K562 (cell line): ENCODE measurements at regions of chr11 and their contacts with region 1.

Region 1: DNA sequence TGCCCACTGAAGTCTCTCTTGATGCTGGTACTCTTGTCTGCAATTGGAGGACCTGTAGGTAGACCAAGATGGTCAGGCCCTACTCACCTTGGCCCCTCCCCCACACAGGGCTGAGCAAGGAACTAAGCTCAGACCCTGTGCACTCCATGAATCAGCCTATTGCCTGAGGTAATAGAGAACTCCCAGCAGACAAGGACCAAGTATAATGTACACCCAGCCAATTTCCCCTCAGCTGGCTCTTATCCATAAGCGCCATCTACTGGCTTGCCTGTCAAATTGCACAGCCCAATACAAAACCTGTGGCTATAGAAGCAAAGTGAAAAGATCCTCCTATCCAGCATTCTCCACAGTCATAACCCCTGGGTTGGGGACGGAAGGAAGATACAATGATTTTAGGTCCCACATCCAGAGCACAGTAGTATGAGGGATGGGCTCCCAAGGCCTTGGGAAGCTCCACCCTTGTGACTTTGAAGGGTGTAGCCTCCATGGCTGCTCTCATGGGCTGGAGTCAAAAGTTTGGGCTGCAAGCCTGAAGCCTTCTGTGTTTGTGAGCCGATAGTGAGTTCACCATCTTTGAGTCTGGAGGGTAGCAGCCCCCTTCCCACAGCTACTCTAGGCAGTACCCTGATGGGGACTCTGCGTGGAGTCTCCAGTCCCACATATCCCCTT is 56.0 kb downstream of the GLYATL2 start:
- DNase-seq: peak; percentile 52 to 79 (median 60)
- ATAC-seq: peak; percentile 96
- H3K4me3 ChIP-seq: no peak overlapping the region
- H3K27ac ChIP-seq: no peak overlapping the region
- H3K4me1 ChIP-seq: peaks cover 0 to 8% of the 10 kb centered on the region in 2 experiments; a peak in 4 of 5 replicates
- H3K27me3 ChIP-seq: no peaks in the 10 kb centered on the region
- CTCF ChIP-seq: peak; percentile 92 to 97 (median 93)
- EP300 ChIP-seq: no peak
- POLR2A ChIP-seq: no peak
- RAD21 ChIP-seq: peak; percentile 97

Region 2: DNA sequence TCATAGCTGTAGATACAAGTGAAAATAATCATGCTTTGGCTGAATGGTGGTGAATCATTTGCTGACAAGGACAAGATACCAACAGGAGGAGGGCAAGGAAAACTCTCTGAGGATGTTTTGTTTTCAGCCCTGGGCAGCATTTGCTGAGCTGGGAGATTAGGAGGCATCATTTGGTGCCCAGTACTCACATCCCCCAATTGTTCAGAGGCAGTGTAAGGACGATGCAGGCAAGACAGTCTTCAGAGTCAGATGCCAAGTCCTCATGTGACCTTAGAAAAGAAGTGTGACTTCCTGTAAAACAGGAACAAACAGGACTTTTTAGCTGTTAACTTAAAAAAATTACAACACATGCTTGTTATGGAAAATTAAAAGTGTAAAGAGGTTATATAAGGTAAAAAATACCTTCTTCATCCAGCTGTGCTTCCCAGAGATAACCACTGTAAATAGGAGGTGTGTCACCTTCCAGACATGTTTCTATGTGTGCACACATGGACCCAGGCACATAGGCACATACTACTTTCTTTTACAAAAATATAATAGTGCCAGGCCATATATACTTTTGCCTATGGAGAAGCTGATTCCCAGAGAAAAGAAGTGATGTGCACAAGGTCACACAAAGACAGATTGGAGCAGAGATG is 148.0 kb before region 1 on chr11:
- CTCF ChIA-PET with region 1: interaction called, 6 read pairs
- POLR2A ChIA-PET with region 1: no interaction called
- in situ Hi-C with region 1: no loop called
- intact Hi-C with region 1: loop called (anchors 1 kb)
- DNase-seq: no peak
- ATAC-seq: no peak
- H3K4me3 ChIP-seq: no peak overlapping the region
- H3K27ac ChIP-seq: no peak overlapping the region
- H3K4me1 ChIP-seq: peaks cover 0 to 9% of the 10 kb centered on the region in 2 experiments; a peak in 3 of 5 replicates
- H3K27me3 ChIP-seq: no peaks in the 10 kb centered on the region
- CTCF ChIP-seq: no peak
- EP300 ChIP-seq: no peak
- POLR2A ChIP-seq: no peak
- RAD21 ChIP-seq: no peak

Region 3: DNA sequence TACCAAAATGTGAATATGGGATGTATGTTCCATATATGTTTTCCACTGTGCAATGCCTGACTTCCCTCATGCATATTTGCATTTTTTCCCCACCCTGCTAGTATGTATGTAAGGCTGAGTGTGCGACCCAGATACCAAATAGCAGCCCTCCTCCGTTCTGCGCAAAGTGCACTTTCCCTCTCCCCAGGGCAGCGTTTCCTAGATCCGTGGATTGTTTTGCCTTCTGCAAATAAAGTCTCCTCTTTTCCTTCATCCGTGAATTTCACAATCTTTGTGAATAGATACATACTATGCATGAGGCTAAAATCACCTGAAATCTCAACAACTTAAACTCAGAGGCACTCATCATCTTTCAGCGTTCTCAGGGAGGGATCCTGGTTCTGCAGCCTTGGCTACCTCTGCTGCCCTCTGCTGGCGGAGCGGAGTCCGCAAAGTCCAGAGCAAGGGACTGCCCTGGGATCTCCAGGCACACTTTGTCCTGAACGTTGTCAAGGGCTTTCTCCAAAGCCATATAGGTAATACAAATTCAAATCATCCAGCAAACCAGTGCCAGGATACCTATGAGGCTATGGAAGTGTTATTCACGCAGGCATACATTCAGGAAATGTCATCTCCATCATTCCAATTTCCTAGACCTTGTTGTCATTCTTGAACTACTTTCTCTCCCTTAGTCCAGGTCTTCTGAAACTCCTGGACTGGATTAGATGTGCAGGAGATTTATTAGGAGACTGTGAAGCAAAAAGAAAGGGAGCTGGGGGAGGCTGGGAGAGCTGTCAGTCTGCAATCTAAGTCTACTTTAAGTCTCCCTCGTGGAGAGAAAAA is 112.9 kb before region 1 on chr11:
- CTCF ChIA-PET with region 1: no interaction called
- POLR2A ChIA-PET with region 1: interaction called, 3 read pairs
- in situ Hi-C with region 1: loop called (anchors 10 kb)
- intact Hi-C with region 1: loop called (anchors 1 kb)
- DNase-seq: peak; percentile 73 to 84 (median 78)
- ATAC-seq: peak; percentile 99
- H3K4me3 ChIP-seq: no peak overlapping the region
- H3K27ac ChIP-seq: no peak overlapping the region
- H3K4me1 ChIP-seq: no peaks in the 10 kb centered on the region; a peak in 1 of 5 replicates
- H3K27me3 ChIP-seq: peaks cover 0 to 11% of the 10 kb centered on the region in 2 experiments; a peak in 1 of 5 replicates
- CTCF ChIP-seq: peak; percentile 83 to 97 (median 86)
- EP300 ChIP-seq: no peak
- POLR2A ChIP-seq: no peak
- RAD21 ChIP-seq: peak; percentile 71 to 78

Region 4: GRCh38 chr11:58745705-58746364 is 42.7 kb before region 1 on chr11:
- CTCF ChIA-PET with region 1: no interaction called
- POLR2A ChIA-PET with region 1: no interaction called
- in situ Hi-C with region 1: no loop called
- intact Hi-C with region 1: loop called (anchors 5 kb)
- DNase-seq: peak in 3 of 4 experiments; percentile 11 to 68 (median 36)
- ATAC-seq: peak; percentile 86
- H3K4me3 ChIP-seq: no peak overlapping the region
- H3K27ac ChIP-seq: peak overlapping the region; percentile 59
- H3K4me1 ChIP-seq: peaks cover 0 to 25% of the 10 kb centered on the region in 2 experiments; a peak in 3 of 5 replicates
- H3K27me3 ChIP-seq: no peaks in the 10 kb centered on the region
- CTCF ChIP-seq: no peak
- EP300 ChIP-seq: peak; percentile 82
- POLR2A ChIP-seq: no peak
- RAD21 ChIP-seq: 0 out of 4 replicates have a peak, but pooled peaks have one; percentile 6 to 9

Region 5: GRCh38 chr11:58768137-58768536 is 20.4 kb before region 1 on chr11:
- CTCF ChIA-PET with region 1: no interaction called
- POLR2A ChIA-PET with region 1: no interaction called
- in situ Hi-C with region 1: no loop called
- intact Hi-C with region 1: no loop called
- DNase-seq: no peak
- ATAC-seq: no peak
- H3K4me3 ChIP-seq: no peak overlapping the region
- H3K27ac ChIP-seq: no peak overlapping the region
- H3K4me1 ChIP-seq: peaks cover 6 to 51% of the 10 kb centered on the region in 2 experiments; a peak in 4 of 5 replicates
- H3K27me3 ChIP-seq: no peaks in the 10 kb centered on the region
- CTCF ChIP-seq: no peak
- EP300 ChIP-seq: no peak
- POLR2A ChIP-seq: no peak
- RAD21 ChIP-seq: no peak

Region 6: DNA sequence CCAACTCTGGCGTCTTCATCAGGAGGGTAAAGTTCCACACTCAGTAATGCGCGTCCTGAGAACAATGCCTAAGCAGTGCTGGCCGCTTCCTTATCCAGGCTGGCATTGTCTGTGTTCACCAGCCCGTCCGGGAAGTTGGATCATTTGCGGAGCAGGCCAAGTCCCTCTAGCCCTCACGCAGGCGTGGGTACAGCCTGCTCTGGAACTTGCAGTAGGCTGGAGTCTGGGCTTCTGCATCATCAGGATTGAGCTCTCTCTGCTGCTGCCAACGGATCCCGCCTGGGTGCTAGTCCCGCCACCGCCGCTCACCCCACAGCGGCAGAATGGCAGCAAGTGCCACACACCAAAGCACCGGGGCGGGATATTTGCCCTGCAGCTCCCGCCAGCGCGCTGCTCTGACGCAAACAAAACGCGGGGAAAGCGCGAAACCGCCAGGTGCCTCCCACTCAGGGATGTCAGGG is 179.8 kb after region 1 on chr11:
- CTCF ChIA-PET with region 1: no interaction called
- POLR2A ChIA-PET with region 1: no interaction called
- in situ Hi-C with region 1: no loop called
- intact Hi-C with region 1: no loop called
- DNase-seq: no peak
- ATAC-seq: no peak
- H3K4me3 ChIP-seq: no peak overlapping the region
- H3K27ac ChIP-seq: no peak overlapping the region
- H3K4me1 ChIP-seq: peaks cover 0 to 3% of the 10 kb centered on the region in 2 experiments; a peak in 1 of 5 replicates
- H3K27me3 ChIP-seq: peaks cover 0 to 14% of the 10 kb centered on the region in 2 experiments; a peak in 3 of 5 replicates
- CTCF ChIP-seq: no peak
- EP300 ChIP-seq: no peak
- POLR2A ChIP-seq: no peak
- RAD21 ChIP-seq: no peak